Left ventricle myocardium superior (tissue), 1 donor: ENCODE measurements at regions of chr2 and their contacts with region 1.

Region 1: DNA sequence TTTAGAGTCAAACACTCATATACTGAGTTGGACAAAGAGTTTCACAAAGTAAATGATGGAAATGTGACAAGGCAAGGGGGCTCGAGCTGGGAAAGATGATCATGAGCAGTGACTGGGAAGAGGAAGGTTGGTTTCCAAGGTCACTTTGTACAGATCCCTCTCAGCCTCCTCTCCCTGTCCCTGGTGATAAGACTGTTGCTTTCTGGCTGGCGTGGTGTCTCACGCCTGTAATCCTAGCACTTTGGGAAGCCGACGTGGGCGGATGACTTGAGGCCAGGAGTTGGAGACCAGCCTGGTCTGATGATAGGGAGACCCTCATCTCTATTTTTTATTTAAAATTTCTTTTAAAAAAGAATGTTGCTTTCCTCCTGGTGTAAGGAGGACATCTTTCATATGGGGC is 86.6 kb upstream of the STPG4 start:
- DNase-seq: no peak
- ATAC-seq: no peak

Region 2: GRCh38 chr2:47179388-47179787 is 62.3 kb before region 1 on chr2:
- intact Hi-C with region 1: loop called (anchors 2 kb)
- DNase-seq: no peak
- ATAC-seq: no peak

Region 3: GRCh38 chr2:48059977-48060376 is 818.3 kb after region 1 on chr2:
- intact Hi-C with region 1: no loop called
- DNase-seq: no peak
- ATAC-seq: no peak